ENCODE measurements at regions of chr3 and their contacts with region 1.

Region 1: GRCh38 chr3:15108082-15108545 is 9.2 kb upstream of the RBSN start:
- H3K4me3 ChIP-seq: no peak overlapping the region
- H3K27ac ChIP-seq: no peak overlapping the region
- H3K4me1 ChIP-seq: no peaks in the 10 kb centered on the region
- CTCF ChIP-seq: peak; percentile 81

Region 2: GRCh38 chr3:14836049-14836468 is 272.1 kb before region 1 on chr3:
- CTCF ChIA-PET with region 1: no interaction called
- POLR2A ChIA-PET with region 1: no interaction called
- H3K4me3 ChIP-seq: no peak overlapping the region
- H3K27ac ChIP-seq: no peak overlapping the region
- H3K4me1 ChIP-seq: no peaks in the 10 kb centered on the region
- CTCF ChIP-seq: no peak

Region 3: GRCh38 chr3:14899993-14900618 is 208.0 kb before region 1 on chr3:
- CTCF ChIA-PET with region 1: no interaction called
- POLR2A ChIA-PET with region 1: no interaction called
- H3K4me3 ChIP-seq: no peak overlapping the region
- H3K27ac ChIP-seq: no peak overlapping the region
- H3K4me1 ChIP-seq: no peaks in the 10 kb centered on the region
- CTCF ChIP-seq: no peak

Region 4: DNA sequence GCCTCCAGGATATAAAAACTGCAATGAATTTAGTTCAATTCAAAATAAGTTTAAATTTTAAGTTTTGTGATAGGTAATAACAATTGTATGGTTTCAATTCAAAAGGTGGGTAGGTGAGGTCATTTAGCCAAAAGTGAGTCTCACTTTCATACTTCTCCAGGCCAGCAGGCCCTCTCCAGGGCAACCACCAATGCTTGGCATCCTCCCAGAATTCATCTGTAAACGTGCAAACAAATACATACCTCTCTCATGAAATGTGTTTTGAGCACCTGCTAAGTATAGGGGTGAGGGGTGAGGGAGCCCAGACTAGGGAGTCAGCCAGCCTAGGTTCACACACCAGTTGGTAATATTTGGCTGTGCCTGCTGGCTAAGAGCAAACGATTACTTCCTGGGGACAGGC is 12.9 kb after region 1 on chr3:
- CTCF ChIA-PET with region 1: interaction called, 36 read pairs
- POLR2A ChIA-PET with region 1: no interaction called
- H3K4me3 ChIP-seq: no peak overlapping the region
- H3K27ac ChIP-seq: no peak overlapping the region
- H3K4me1 ChIP-seq: no peaks in the 10 kb centered on the region
- CTCF ChIP-seq: no peak